WTC11 (cell line): ENCODE measurements at regions of chr19 and their contacts with region 1.

Region 1: DNA sequence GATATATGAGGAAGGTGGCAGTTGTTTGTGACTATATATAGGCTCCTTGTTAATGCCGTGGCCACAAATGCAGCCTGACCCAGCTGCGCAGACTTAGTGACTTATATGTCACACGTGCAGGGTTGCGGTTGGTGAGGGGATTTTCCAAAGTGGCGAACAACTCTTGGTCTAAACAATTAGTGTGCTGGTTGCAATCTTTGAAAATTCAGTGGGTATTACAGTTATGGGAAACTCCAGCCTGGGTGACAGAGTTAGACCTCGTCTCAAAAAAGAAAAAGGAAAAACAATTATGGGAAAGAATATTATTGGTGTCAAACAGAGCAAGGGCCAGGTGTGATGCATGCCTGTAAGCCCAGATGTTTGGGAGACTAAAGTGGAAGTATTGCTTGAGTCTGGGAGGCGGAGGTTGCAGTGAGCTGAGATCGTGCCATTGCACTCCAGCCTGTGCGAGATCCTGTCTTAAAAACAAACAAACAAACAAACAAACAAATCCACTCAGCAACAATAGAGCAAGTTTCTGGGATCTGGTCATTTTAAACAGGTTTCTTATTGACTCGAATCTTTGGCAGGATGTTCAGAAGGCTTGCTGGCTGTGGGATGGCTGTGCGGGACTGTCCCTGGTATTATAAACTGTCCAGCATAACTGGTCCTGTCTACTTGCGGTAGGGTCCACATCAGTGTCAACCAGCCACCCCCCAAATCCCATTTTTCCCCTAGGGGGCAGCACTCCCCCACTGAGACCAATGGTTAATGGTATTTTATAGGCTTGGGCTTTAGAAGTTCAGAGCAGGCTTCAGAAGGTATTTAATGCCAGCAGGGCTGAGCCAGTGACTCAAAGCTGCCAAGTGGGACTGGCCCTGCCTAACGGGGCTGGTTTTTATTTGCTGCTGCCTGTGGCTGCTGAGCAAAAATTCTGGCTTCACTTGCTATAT is 15.4 kb downstream of the RELB start:
- DNase-seq: peak; percentile 87
- ATAC-seq: peak; percentile 96
- H3K4me3 Mint-ChIP-seq: no peak overlapping the region
- H3K27ac Mint-ChIP-seq: peak overlapping the region; percentile 49; the same call in 1 of the 2 replicates
- H3K4me1 Mint-ChIP-seq: peaks cover 8% of the 10 kb centered on the region
- H3K27me3 Mint-ChIP-seq: no peaks in the 10 kb centered on the region
- CTCF ChIP-seq: peak; percentile 54; the same call in 1 of the 2 replicates

Region 2: GRCh38 chr19:44770550-44771257 is 245.9 kb before region 1 on chr19:
- CTCF ChIA-PET with region 1: no interaction called
- POLR2A ChIA-PET with region 1: no interaction called
- DNase-seq: peak; percentile 99
- ATAC-seq: peak; percentile 100
- H3K4me3 Mint-ChIP-seq: no peak overlapping the region; the same call in 1 of the 2 replicates
- H3K27ac Mint-ChIP-seq: 0 out of 2 replicates have a peak overlapping the region, but pooled peaks have one; percentile 60
- H3K4me1 Mint-ChIP-seq: peaks cover 6% of the 10 kb centered on the region
- H3K27me3 Mint-ChIP-seq: peaks cover 36% of the 10 kb centered on the region
- CTCF ChIP-seq: peak; percentile 82

Region 3: GRCh38 chr19:45001087-45001739 is 15.4 kb before region 1 on chr19 and contains the start of gene RELB:
- CTCF ChIA-PET with region 1: interaction called, 11 read pairs
- POLR2A ChIA-PET with region 1: interaction called, 7 read pairs
- DNase-seq: peak; percentile 97
- ATAC-seq: peak; percentile 47
- H3K4me3 Mint-ChIP-seq: peak within 1 kb of the TSS; percentile 88
- H3K27ac Mint-ChIP-seq: peak within 1 kb of the TSS; percentile 97
- H3K4me1 Mint-ChIP-seq: peaks cover 6% of the 10 kb centered on the region; the same call in 1 of the 2 replicates
- H3K27me3 Mint-ChIP-seq: peaks cover 9% of the 10 kb centered on the region
- CTCF ChIP-seq: no peak
- total RNA-seq, gene RELB: 8.9 to 10.6 TPM (median 9.9 TPM) in 3 replicates

Region 4: GRCh38 chr19:45038931-45039893 is 22.6 kb after region 1 on chr19 and contains the start of gene CLASRP:
- CTCF ChIA-PET with region 1: interaction called, 15 read pairs
- POLR2A ChIA-PET with region 1: no interaction called
- DNase-seq: peak; percentile 89
- ATAC-seq: peak; percentile 92
- H3K4me3 Mint-ChIP-seq: peak within 1 kb of the TSS; percentile 98
- H3K27ac Mint-ChIP-seq: peak within 1 kb of the TSS; percentile 92
- H3K4me1 Mint-ChIP-seq: peaks cover 10% of the 10 kb centered on the region
- H3K27me3 Mint-ChIP-seq: no peaks in the 10 kb centered on the region
- CTCF ChIP-seq: no peak
- total RNA-seq, gene CLASRP: 85.0 to 88.9 TPM (median 88.0 TPM) in 3 replicates

Region 5: DNA sequence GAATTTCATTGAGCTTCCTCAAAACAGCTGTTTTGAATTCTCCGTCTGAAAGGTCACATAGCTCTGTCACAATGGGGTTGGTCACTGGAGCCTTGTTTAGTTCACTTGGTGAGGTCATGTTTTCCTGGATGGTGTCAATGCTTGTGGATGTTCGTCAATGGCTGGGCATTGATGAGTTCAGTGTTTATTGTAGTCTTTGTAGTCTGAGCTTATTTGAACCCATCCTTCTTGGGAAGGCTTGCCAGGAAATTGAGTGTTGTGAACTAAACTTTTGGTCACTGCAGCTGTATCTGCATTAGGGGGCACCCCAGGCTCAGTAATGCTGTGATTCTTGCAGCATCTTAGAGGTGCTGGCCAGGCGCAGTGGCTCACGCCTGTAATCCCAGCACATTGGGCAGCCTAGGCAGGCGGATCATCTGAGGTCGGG is 183.9 kb after region 1 on chr19:
- CTCF ChIA-PET with region 1: no interaction called
- POLR2A ChIA-PET with region 1: no interaction called
- DNase-seq: peak; percentile 75
- ATAC-seq: peak; percentile 83
- H3K4me3 Mint-ChIP-seq: no peak overlapping the region
- H3K27ac Mint-ChIP-seq: no peak overlapping the region
- H3K4me1 Mint-ChIP-seq: no peaks in the 10 kb centered on the region
- H3K27me3 Mint-ChIP-seq: peaks cover 33% of the 10 kb centered on the region
- CTCF ChIP-seq: no peak